A673 (cell line): ENCODE measurements at regions of chr22 and their contacts with region 1.

Region 1: GRCh38 chr22:39532215-39533071 is at the start of gene RPS19BP1:
- DNase-seq: peak; percentile 100
- H3K4me3 ChIP-seq: peak within 1 kb of the TSS; percentile 87
- H3K27ac ChIP-seq: peak within 1 kb of the TSS; percentile 93
- H3K4me1 ChIP-seq: peaks cover 48% of the 10 kb centered on the region
- H3K27me3 ChIP-seq: no peaks in the 10 kb centered on the region
- CTCF ChIP-seq: no peak
- total RNA-seq, gene RPS19BP1: 93.5 and 97.2 TPM in 2 replicates

Region 2: DNA sequence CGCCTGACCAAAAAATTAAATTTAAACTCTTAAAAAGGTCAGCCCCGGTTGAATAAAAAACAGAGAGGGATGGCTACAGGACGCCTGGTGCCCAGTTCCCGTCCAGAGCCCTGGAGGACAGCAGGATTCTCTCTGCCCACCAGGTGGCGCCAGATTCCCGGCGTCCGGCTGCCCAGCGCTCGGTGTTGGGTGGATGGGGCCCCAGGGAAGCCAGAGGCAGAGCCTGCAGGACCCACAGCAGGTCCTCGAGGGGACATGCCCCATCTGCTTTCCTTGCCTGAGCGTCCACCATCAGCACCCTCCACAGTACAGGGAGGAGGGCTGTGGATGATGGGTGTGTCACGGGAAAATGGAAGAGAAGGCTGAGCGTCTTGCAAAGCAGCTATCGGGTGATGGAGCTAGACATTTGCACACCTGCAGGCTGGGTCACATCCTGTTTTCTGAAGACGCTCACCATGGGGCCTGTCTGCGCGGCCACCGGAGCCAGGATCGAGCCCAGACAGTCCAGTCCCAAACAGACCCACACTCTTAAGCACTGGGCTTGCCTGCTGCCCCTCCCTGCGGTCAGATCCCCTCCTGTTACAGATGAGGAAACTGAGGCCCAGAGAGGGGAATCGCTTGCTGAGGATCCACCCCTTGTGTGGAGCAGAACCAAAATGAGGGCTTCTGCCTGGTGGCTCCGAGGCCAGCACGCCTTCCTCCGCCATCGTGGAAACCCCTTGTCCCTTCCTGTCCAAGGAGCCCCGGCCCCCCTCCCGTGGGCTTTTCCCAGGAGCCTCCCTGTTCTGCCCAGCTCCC is 361.4 kb before region 1 on chr22:
- CTCF ChIA-PET with region 1: interaction called, 6 read pairs
- POLR2A ChIA-PET with region 1: interaction called, 3 read pairs
- intact Hi-C with region 1: loop called (anchors 2 kb)
- DNase-seq: peak; percentile 84
- H3K4me3 ChIP-seq: no peak overlapping the region
- H3K27ac ChIP-seq: no peak overlapping the region
- H3K4me1 ChIP-seq: peaks cover 20% of the 10 kb centered on the region
- H3K27me3 ChIP-seq: no peaks in the 10 kb centered on the region
- CTCF ChIP-seq: peak; percentile 94

Region 3: GRCh38 chr22:39496131-39496838 is 36.2 kb before region 1 on chr22:
- CTCF ChIA-PET with region 1: interaction called, 26 read pairs
- POLR2A ChIA-PET with region 1: no interaction called
- intact Hi-C with region 1: no loop called
- DNase-seq: peak; percentile 86
- H3K4me3 ChIP-seq: no peak overlapping the region
- H3K27ac ChIP-seq: no peak overlapping the region
- H3K4me1 ChIP-seq: peaks cover 12% of the 10 kb centered on the region
- H3K27me3 ChIP-seq: no peaks in the 10 kb centered on the region
- CTCF ChIP-seq: peak; percentile 89

Region 4: GRCh38 chr22:39577366-39577765 is 44.9 kb after region 1 on chr22:
- CTCF ChIA-PET with region 1: interaction called, 11 read pairs
- POLR2A ChIA-PET with region 1: interaction called, 3 read pairs
- intact Hi-C with region 1: no loop called
- DNase-seq: no peak
- H3K4me3 ChIP-seq: no peak overlapping the region
- H3K27ac ChIP-seq: no peak overlapping the region
- H3K4me1 ChIP-seq: no peaks in the 10 kb centered on the region
- H3K27me3 ChIP-seq: no peaks in the 10 kb centered on the region
- CTCF ChIP-seq: no peak

Region 5: DNA sequence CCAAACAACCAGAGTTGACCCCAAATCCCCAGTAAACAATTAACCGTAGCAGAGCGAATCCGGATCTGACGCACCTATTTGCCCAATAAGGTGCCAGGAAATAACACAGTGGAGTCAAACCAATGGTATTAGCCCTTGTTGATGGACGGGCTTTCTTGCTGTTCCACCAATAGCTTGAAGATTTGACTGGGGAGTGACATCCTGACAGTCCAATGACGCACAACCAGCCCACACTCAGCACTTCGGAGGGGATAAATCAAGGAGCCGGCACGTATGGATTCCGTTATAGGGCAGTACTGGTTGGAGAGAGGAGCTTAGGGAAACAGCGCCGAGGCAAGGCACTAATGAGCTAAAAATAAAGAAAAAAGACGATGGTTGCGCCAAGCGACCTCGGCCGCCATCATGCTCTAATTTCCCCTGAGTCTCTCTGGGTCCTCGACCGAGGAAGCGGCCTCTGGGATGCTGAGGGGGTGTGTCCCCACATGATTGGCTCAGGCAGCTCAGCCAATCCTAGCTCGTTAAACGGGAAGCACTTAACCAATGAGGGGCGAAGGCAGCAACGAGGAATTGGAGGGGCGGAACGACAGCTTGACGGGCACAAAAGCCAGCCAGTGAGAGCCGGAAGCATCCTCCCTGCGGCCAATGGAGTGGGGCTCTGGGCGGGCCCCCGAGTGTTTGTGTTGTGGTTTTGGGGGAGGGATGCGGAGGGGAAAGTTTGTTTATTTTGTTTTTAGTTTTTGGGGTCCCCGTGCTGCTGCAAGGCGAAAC is 511.8 kb after region 1 on chr22:
- CTCF ChIA-PET with region 1: no interaction called
- POLR2A ChIA-PET with region 1: no interaction called
- intact Hi-C with region 1: loop called (anchors 5 kb)
- DNase-seq: peak; percentile 99
- H3K4me3 ChIP-seq: peak overlapping the region; percentile 59
- H3K27ac ChIP-seq: peak overlapping the region; percentile 73
- H3K4me1 ChIP-seq: peaks cover 43% of the 10 kb centered on the region
- H3K27me3 ChIP-seq: peaks cover 2% of the 10 kb centered on the region
- CTCF ChIP-seq: no peak